Aorta (tissue), 5 donors: ENCODE measurements at regions of chr22 and their contacts with region 1.

Region 1: GRCh38 chr22:31630331-31631329 is 31.4 kb downstream of the PISD start:
- DNase-seq: peak; percentile 91 to 93
- ATAC-seq: peak; percentile 79
- H3K4me3 ChIP-seq: peak overlapping the region; percentile 35 to 88
- H3K27ac ChIP-seq: peak overlapping the region in 1 of 2 donors; percentile 62
- H3K4me1 ChIP-seq: no peaks in the 10 kb centered on the region
- H3K27me3 ChIP-seq: no peaks in the 10 kb centered on the region

Region 2: DNA sequence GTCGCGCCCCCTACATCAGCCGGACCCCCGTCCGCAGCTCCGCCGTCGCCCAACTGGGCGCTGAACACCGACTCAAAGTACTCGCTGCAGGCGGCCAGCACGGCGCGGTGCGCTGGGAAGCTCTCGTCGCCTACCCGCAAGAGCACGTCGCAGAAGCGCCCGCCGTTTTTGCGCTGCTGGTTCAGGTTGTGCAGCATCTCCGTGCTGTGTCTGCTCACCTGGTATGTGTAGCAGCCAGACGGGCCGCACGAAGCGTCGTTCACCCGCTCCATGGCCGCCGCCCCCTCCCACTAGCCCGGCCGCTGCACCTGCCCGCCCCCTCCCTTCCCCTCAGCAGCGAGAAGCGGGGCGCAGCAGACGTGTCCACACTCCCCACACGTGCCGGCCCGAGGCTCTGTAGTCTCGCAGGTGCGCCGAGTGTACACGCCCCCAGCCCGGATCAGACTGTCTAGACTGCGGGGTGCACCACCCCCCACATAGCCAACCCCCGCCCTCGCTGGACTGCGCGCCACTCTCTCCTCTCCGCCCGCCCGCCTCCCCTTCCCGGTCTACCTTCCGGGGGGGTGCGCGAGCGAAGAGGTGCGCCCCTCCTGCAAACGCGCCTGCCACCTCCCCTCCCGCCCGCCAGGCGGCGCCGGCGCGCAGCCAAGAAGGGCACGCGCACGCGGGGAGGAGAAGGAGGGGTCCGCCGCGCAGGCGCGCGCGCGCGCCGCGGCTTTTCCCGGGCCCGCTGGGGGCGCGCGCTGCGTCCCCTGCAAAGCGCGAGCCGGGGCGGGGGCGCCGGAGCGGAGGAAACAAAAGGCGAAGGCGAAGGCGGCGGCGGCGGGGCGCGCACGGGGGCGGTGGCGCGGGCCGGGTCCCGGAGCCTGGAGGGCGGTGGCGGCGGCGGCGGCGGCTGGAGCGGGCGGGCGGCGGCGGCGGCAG is 285.0 kb before region 1 on chr22:
- intact Hi-C with region 1: loop called in 1 of 2 experiments (anchors 10 kb)
- DNase-seq: peak; percentile 88 to 94
- ATAC-seq: peak; percentile 84
- H3K4me3 ChIP-seq: peak overlapping the region; percentile 66 to 94
- H3K27ac ChIP-seq: peak overlapping the region in 1 of 2 donors; percentile 33
- H3K4me1 ChIP-seq: peaks cover 0 to 3% of the 10 kb centered on the region in 2 donors
- H3K27me3 ChIP-seq: no peaks in the 10 kb centered on the region

Region 3: DNA sequence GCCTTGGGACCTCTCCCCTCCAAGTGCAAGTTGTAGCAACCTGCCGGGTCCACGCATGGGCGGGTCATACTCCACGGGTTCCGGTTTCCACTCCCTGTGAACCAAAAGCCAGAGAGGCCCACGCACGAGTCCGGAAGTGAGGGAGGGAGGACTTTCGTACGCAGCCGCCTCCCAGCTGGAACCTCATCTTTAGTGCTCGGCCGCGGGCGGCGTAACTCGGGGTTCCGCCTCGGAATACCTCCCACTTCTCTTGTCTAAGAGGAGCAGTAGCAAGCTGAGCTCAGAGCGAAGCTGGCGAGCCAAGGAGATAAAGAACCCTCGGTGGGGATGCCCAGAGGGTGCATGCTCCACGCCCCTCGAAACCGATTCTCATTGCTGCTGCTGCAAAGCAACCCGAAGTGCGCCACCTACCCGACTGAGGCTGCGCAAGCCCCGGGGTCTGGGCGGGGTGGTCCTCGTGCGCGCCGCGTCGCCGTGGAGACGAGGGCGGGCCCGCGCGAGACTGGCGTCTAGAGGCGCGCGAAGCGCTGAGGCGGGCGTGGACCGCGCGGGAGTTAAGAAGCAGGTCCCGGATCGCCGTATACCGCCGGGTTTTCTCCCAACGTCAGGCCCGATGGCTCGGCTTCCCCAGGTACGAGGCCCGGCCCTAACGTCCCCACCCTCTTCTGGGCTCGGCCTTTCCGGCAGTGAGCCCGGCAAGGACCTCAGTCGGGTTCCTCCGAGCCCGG is 134.5 kb before region 1 on chr22 and contains the start of gene SFI1:
- intact Hi-C with region 1: loop called in 1 of 2 experiments (anchors 5 kb)
- DNase-seq: peak; percentile 96 to 97
- ATAC-seq: peak; percentile 99
- H3K4me3 ChIP-seq: peak within 1 kb of the TSS; percentile 20 to 41
- H3K27ac ChIP-seq: peak within 1 kb of the TSS; percentile 31 to 60
- H3K4me1 ChIP-seq: no peaks in the 10 kb centered on the region
- H3K27me3 ChIP-seq: no peaks in the 10 kb centered on the region
- total RNA-seq, gene SFI1: 25.7 to 50.3 TPM

Region 4: GRCh38 chr22:31561238-31561887 is 69.3 kb before region 1 on chr22:
- intact Hi-C with region 1: loop called (anchors 1 to 5 kb)
- DNase-seq: peak; percentile 78 to 87
- ATAC-seq: peak; percentile 89
- H3K4me3 ChIP-seq: no peak overlapping the region
- H3K27ac ChIP-seq: no peak overlapping the region
- H3K4me1 ChIP-seq: no peaks in the 10 kb centered on the region
- H3K27me3 ChIP-seq: no peaks in the 10 kb centered on the region

Region 5: DNA sequence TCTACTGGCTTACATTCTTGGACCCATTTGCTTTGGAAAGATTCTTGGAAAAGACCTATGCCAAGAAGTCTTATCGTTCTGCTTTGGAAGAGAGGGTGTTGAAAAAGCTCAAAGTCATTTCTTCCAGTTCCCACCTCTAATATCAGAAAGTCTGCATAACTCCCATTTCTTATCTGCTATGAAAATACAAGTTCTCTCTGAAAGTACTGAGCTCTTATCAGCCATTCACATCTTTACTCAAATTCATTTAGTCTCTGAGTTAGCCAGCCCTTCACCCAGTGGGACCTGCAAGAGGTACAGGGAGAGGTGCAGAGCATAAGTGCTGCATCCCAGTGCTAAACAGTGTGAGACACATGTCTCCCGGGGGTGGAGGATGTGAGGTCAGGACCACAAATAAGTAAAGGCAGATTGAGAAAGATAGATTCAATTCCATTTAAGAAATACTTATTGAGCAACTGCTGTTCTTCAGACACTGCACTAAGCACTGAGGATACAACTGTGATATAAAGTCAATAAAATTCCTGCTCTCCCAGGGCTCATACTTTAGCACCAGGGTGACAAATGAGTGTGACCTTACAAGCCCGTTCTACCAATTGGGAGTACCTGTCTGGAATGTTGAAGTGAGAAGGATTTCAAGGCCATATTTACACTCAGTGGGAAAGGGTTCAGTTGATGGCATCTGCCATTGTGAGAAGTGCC is 45.3 kb before region 1 on chr22:
- intact Hi-C with region 1: no loop called
- DNase-seq: no peak
- ATAC-seq: peak; percentile 65
- H3K4me3 ChIP-seq: no peak overlapping the region
- H3K27ac ChIP-seq: no peak overlapping the region
- H3K4me1 ChIP-seq: no peaks in the 10 kb centered on the region
- H3K27me3 ChIP-seq: no peaks in the 10 kb centered on the region

Region 6: DNA sequence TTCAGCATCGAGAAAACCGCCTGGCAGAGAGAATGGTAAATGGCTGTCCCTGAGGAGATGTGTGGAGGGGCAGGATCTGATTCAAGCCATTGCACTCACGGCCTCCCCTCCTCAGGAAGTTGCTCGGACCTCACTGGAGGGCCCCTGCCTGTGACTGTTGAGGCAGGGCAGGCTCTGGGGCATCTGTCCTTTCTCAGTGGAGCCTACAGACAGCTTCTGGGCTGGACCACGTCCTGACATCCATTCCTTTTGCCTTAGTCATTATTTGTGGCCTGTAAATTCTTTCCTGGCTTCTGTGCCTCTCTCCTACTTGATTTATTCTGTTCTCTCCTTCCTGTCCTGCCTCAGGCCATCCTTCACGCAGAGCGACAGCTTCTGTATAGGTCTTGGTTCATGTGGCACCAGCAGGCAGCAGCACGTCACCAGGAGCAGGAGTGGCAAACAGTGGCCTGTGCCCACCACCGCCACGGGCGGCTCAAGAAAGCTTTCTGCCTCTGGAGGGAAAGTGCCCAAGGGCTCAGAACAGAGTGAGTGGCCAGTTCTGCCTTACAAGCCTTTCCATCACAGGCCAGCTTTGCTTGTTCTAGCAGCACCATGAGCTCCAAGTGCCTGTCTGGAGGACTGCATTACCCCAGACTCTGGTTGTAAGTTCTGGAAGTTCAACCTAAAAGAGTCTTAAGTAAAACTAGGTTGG is 28.2 kb before region 1 on chr22:
- intact Hi-C with region 1: loop called in 1 of 2 experiments (anchors 1 kb)
- DNase-seq: peak in 1 of 2 donors; percentile 65
- ATAC-seq: peak; percentile 56
- H3K4me3 ChIP-seq: no peak overlapping the region
- H3K27ac ChIP-seq: peak overlapping the region in 1 of 2 donors; percentile 60
- H3K4me1 ChIP-seq: no peaks in the 10 kb centered on the region
- H3K27me3 ChIP-seq: no peaks in the 10 kb centered on the region